GM12878 (cell line): ENCODE measurements at regions of chrX and their contacts with region 1.

Region 1: DNA sequence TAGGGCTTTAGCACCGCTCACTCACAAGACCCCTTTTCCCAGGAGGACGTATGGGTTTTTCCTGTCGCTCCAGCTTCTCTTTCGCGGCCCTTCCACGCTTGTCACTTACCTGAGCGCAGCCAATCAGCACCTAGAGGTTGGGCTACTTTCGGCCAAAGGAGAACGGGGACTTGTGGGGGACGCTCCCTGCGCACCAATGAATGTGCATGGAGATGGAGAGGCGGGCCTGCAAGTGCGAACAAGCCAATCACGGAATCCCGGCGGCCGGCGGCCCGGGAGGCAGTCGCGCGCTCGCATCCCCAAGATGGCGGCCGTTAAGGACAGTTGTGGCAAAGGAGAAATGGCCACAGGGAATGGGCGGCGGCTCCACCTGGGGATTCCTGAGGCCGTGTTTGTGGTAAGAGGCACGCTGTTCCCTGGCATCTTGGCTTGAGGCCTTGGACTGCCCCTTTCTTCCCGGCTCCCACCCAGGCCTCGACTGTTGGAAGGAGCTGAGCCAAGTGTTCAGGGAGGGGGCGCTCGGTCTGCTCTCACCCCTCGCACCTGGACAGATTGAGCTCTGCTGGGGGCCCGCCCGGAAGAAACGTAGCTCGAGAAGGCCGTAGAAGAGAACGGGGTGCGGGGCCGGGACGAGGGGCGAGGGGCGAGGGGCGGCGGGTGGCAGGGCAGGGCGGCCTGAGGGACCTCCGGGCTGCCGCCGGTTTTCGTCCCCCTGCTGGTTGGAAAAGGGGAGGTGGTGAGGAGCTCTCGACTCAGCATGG is at the start of gene VBP1:
- DNase-seq: peak; percentile 84
- ATAC-seq: peak; percentile 97
- H3K4me3 ChIP-seq: peak within 1 kb of the TSS; percentile 67
- H3K27ac ChIP-seq: peak within 1 kb of the TSS; percentile 82
- H3K4me1 ChIP-seq: no peaks in the 10 kb centered on the region
- H3K27me3 ChIP-seq: no peaks in the 10 kb centered on the region
- CTCF ChIP-seq: peak in 2 of 3 experiments; percentile 25 to 31; a peak in 3 of 6 replicates
- EP300 ChIP-seq: no peak
- POLR2A ChIP-seq: peak; percentile 88
- RAD21 ChIP-seq: no peak
- polyA plus RNA-seq, gene VBP1: 140 to 182 TPM

Region 2: DNA sequence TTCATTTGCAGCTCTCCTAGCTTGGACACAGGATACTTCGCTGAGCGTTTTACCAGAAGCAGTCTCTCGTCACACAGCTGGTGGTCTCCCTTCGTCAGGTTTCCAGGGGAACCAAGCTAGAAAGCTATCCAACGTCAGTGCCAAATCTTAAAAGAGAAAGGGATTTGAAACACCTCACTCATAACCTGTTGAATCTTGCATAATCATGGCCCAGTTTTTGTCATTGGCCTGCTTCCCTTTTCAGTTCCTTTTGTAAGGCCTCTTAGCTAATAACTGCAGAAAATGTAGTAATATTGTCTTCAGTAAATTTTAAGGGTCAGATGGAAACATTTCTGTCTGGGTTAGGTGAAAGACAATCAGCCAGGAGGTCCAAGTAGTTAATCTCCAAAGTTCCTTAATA is 25.9 kb after region 1 on chrX:
- CTCF ChIA-PET with region 1: interaction called, 3 read pairs
- POLR2A ChIA-PET with region 1: interaction called, 3 read pairs
- RAD21 ChIA-PET with region 1: interaction called, 16 read pairs
- SMC1A ChIA-PET with region 1: interaction called, 5 read pairs
- in situ Hi-C with region 1: no loop called
- intact Hi-C with region 1: no loop called
- DNase-seq: no peak
- ATAC-seq: peak; percentile 75
- H3K4me3 ChIP-seq: no peak overlapping the region
- H3K27ac ChIP-seq: no peak overlapping the region
- H3K4me1 ChIP-seq: no peaks in the 10 kb centered on the region
- H3K27me3 ChIP-seq: no peaks in the 10 kb centered on the region
- CTCF ChIP-seq: no peak
- EP300 ChIP-seq: no peak
- POLR2A ChIP-seq: no peak
- RAD21 ChIP-seq: no peak

Region 3: DNA sequence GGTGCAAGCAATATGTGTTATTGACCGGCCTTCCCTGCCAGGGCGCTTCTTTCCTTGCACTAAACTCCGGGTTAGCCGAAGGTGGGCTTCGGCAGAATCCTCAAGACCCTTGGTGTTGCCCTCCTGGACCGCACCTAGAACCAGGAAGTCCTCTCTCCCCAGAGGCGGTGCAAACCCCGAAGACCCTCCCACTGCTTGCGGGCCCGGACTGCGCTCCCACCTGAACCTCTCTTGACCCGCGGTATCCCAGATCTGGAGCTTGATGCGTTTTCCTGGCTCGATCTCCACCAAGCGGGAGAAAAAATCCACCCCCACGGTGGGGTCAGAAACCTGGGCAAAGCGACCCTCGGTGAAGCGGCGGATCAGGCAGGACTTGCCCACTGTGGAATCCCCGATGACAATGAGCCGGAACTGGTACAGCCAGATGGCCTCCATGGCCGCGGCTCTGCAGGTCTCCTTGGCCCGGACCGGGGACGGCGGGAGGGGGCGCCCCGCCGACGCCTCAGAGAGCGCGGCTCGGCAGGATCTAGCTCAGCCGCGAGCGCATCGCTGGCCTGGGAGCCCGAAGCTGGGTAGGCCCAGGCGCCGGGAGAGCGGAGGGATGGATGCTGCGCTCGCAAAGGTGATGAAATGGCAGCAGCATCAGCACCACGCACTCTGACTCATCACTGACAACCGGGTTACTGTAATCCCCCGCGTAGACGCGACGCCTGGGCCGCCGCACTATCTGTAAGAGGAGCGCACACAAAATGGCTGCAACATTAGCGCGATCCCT is 47.7 kb after region 1 on chrX and contains the start of gene RAB39B:
- CTCF ChIA-PET with region 1: no interaction called
- POLR2A ChIA-PET with region 1: no interaction called
- RAD21 ChIA-PET with region 1: interaction called, 4 read pairs
- SMC1A ChIA-PET with region 1: interaction called, 5 read pairs
- in situ Hi-C with region 1: loop called (anchors 5 kb)
- intact Hi-C with region 1: loop called (anchors 1 kb)
- DNase-seq: peak; percentile 24
- ATAC-seq: peak; percentile 92
- H3K4me3 ChIP-seq: peak within 1 kb of the TSS; percentile 56
- H3K27ac ChIP-seq: peak within 1 kb of the TSS; percentile 68
- H3K4me1 ChIP-seq: no peaks in the 10 kb centered on the region
- H3K27me3 ChIP-seq: no peaks in the 10 kb centered on the region
- CTCF ChIP-seq: peak in 1 of 3 experiments; percentile 7; a peak in 1 of 6 replicates
- EP300 ChIP-seq: no peak
- POLR2A ChIP-seq: peak; percentile 71
- RAD21 ChIP-seq: no peak
- polyA plus RNA-seq, gene RAB39B: 1.6 to 2.9 TPM

Region 4: GRCh38 chrX:155966865-155967264 is 750.5 kb after region 1 on chrX:
- CTCF ChIA-PET with region 1: no interaction called
- POLR2A ChIA-PET with region 1: no interaction called
- RAD21 ChIA-PET with region 1: no interaction called
- SMC1A ChIA-PET with region 1: no interaction called
- in situ Hi-C with region 1: no loop called
- intact Hi-C with region 1: no loop called
- DNase-seq: peak; percentile 12
- ATAC-seq: peak; percentile 85
- H3K4me3 ChIP-seq: no peak overlapping the region
- H3K27ac ChIP-seq: no peak overlapping the region
- H3K4me1 ChIP-seq: no peaks in the 10 kb centered on the region
- H3K27me3 ChIP-seq: no peaks in the 10 kb centered on the region
- CTCF ChIP-seq: peak; percentile 51 to 88 (median 54)
- EP300 ChIP-seq: no peak
- POLR2A ChIP-seq: no peak
- RAD21 ChIP-seq: peak; percentile 79